Endothelial cell of umbilical vein (primary cell): ENCODE measurements at regions of chr14 and their contacts with region 1.

Region 1: GRCh38 chr14:68795597-68796417 is 2.9 kb upstream of the ZFP36L1 start:
- DNase-seq: peak; percentile 75
- H3K4me3 ChIP-seq: peak overlapping the region; percentile 59 to 72 (median 72)
- H3K27ac ChIP-seq: peak overlapping the region; percentile 98
- H3K4me1 ChIP-seq: peaks cover 14% of the 10 kb centered on the region
- H3K27me3 ChIP-seq: no peaks in the 10 kb centered on the region
- CTCF ChIP-seq: peak; percentile 42 to 68
- POLR2A ChIP-seq: peak; percentile 1

Region 2: GRCh38 chr14:68137704-68138619 is 657.8 kb before region 1 on chr14:
- CTCF ChIA-PET with region 1: no interaction called
- POLR2A ChIA-PET with region 1: no interaction called
- dilution Hi-C with region 1: no loop called
- intact Hi-C with region 1: loop called (anchors 10 kb)
- DNase-seq: peak; percentile 12
- H3K4me3 ChIP-seq: no peak overlapping the region
- H3K27ac ChIP-seq: no peak overlapping the region
- H3K4me1 ChIP-seq: peaks cover 8% of the 10 kb centered on the region
- H3K27me3 ChIP-seq: no peaks in the 10 kb centered on the region
- CTCF ChIP-seq: no peak
- POLR2A ChIP-seq: no peak

Region 3: DNA sequence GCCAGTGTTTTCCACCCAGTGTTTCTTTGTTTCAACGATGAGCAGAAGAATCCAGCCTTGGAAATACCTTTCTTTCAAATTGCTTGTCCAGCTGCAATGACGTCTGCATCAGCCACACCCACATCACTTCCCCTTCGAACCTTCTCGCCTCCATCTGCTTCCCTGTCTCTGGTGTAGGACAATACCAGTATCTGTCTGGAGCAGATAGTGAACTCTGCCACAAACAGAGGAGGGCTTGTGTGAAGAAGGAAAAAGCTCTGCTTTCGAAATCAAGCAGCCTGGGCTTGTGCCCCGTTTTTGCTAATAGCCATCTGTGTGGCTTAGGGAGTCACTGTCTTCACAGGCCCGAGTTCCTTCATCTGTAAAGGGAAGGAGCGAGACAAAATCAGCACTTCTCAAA is 418.3 kb before region 1 on chr14:
- CTCF ChIA-PET with region 1: interaction called, 3 read pairs
- POLR2A ChIA-PET with region 1: no interaction called
- dilution Hi-C with region 1: no loop called
- intact Hi-C with region 1: loop called (anchors 5 kb)
- DNase-seq: peak; percentile 74
- H3K4me3 ChIP-seq: no peak overlapping the region
- H3K27ac ChIP-seq: no peak overlapping the region
- H3K4me1 ChIP-seq: peaks cover 12% of the 10 kb centered on the region
- H3K27me3 ChIP-seq: no peaks in the 10 kb centered on the region
- CTCF ChIP-seq: no peak
- POLR2A ChIP-seq: no peak

Region 4: DNA sequence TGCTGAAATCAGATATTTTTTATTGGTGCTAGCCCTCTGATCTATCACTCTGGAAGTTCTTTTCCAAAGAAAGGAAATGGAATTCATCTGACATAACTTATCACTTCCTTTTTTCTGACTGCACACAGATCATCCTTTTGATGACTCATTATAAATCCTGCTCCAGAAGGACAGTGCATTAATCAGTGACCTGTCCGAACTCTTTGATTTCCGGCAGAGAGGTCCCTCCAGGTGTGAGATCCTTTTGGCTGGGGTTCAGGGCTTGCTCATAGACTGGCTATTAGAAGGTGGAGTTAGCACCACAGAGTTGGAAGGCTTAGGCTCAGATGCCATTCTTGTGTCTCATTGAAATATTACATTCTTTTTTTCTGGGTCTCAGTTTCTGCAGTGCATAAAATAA is 331.1 kb before region 1 on chr14:
- CTCF ChIA-PET with region 1: interaction called, 5 read pairs
- POLR2A ChIA-PET with region 1: interaction called, 17 read pairs
- dilution Hi-C with region 1: no loop called
- intact Hi-C with region 1: loop called (anchors 1 kb)
- DNase-seq: peak; percentile 63
- H3K4me3 ChIP-seq: no peak overlapping the region
- H3K27ac ChIP-seq: peak overlapping the region; percentile 57
- H3K4me1 ChIP-seq: peaks cover 57% of the 10 kb centered on the region
- H3K27me3 ChIP-seq: no peaks in the 10 kb centered on the region
- CTCF ChIP-seq: no peak
- POLR2A ChIP-seq: no peak

Region 5: DNA sequence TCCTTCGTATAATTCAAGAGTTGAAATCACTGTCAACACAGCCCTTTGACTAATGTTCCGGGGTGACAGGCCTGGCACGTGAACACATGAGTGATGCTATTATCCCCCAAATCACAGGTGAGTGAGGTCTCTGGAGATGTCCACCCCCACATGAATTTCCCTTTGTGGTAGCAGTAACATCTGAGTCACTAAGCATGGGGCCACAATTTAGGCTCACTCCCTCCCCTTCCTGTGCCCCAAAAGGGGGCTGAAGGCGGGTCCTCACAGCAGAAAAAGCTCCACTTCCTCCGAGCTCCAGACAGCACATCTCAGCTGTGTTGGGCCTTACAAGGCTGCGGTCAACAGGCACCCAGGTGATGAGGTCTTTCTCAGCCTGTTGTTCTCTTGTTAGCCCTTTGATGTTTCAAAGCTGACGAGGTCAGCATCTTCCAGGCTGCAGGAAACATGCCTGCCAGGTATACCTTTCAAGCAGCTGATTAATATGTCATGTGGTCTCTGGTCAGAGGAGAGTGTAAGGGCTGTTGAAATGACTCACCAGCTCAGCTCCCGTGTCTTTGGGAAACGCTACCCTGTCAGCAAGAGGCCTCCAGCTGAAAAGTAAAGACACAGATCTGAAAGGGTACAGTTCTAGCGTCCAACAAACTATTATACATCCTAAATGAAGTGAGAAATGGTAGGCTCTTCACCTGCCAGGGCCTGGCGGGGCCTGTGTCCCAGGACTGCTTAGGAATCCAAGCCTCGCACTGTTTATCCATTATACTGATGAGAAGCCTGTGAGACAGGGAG is 110.2 kb before region 1 on chr14:
- CTCF ChIA-PET with region 1: interaction called, 5 read pairs
- POLR2A ChIA-PET with region 1: interaction called, 34 read pairs
- dilution Hi-C with region 1: no loop called
- intact Hi-C with region 1: loop called (anchors 1 kb)
- DNase-seq: no peak
- H3K4me3 ChIP-seq: no peak overlapping the region
- H3K27ac ChIP-seq: no peak overlapping the region
- H3K4me1 ChIP-seq: peaks cover 43% of the 10 kb centered on the region
- H3K27me3 ChIP-seq: no peaks in the 10 kb centered on the region
- CTCF ChIP-seq: no peak
- POLR2A ChIP-seq: no peak

Region 6: DNA sequence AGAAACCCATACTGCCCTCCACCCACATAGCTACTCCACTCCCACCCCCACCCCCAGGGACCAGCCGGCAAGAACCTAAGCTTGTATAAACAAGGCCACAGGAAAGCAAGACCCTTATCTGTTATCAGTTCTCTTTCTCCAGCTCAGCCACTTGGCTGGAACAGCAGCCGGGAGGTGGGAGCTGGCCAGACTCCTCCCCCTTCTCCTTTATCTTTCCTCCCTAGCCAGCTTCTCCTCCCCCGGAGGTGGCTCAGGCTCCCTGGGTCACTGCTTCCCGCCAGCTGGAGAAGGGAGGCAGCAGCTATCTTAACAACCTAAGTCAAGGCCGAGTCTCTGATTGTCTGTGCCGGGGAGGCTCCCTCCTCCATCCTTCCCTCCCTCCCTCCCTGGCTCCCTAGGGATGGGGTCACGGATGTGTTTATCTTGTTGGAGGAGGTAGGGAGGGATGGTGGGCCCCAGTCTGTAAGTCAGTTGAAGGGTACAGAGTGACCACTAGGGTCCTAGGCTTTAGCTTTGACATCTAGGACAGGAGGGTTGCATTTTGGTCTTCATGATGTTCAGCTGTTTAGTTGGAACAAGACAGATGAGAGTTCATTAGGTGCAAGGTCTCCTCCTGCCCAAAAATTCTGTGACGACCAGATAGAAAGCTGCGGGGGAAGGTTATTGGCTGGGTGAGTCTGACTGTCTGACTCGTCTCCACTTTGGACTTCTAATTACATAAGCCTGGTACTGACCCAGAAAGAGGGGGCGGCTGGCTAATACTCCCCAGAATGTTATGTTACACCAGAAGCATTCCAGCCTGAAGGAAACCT is 32.6 kb before region 1 on chr14:
- CTCF ChIA-PET with region 1: interaction called, 4 read pairs
- POLR2A ChIA-PET with region 1: interaction called, 16 read pairs
- dilution Hi-C with region 1: no loop called
- intact Hi-C with region 1: no loop called
- DNase-seq: peak; percentile 92
- H3K4me3 ChIP-seq: no peak overlapping the region
- H3K27ac ChIP-seq: no peak overlapping the region
- H3K4me1 ChIP-seq: peaks cover 28% of the 10 kb centered on the region
- H3K27me3 ChIP-seq: no peaks in the 10 kb centered on the region
- CTCF ChIP-seq: no peak
- POLR2A ChIP-seq: peak; percentile 35

Region 7: GRCh38 chr14:68807148-68807600 is 11.4 kb after region 1 on chr14:
- CTCF ChIA-PET with region 1: interaction called, 12 read pairs
- POLR2A ChIA-PET with region 1: interaction called, 16 read pairs
- dilution Hi-C with region 1: no loop called
- intact Hi-C with region 1: no loop called
- DNase-seq: peak; percentile 95
- H3K4me3 ChIP-seq: no peak overlapping the region
- H3K27ac ChIP-seq: no peak overlapping the region
- H3K4me1 ChIP-seq: peaks cover 6% of the 10 kb centered on the region
- H3K27me3 ChIP-seq: no peaks in the 10 kb centered on the region
- CTCF ChIP-seq: no peak
- POLR2A ChIP-seq: no peak